Activated naive CD4-positive, alpha-beta T cell treated with anti-CD3 and anti-CD28 coated beads for 36 hours (primary cell): ENCODE measurements at regions of chr6 and their contacts with region 1.

Region 1: DNA sequence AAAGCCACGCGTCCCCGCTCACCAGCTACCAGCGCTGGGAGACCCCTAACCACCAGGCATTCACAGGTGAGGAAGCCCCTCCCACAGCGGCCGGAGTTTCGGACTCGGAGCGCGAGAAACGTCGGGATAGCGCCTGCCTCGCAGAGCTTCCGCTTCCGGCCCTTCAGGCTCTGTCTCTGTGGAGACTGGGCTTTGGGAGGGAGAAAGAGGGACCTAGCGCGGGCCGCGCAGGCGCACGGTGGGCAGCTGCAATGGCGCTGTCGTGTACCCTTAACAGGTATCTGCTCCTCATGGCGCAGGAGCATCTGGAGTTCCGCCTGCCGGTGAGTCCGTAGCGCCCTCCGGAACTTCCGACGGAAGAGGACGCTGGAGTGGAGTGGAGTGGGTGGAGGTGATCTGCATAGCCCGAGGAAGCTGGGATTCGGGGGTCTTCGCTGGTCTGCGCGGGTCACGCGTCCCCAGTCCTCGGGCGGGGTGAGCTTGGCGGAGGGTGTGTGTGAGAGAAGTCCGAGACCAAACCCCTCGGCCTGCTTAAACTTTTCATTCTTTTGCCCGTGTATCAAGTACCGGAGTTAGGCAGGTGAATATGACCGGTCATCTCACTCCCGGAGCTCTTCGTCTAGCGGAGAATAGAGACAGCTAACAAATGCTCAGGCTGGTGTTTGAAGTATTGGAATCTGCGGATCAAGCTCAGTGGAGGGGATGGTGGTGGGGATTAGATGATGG is at the start of gene TRMT11:
- DNase-seq: peak; percentile 84
- H3K4me3 Mint-ChIP-seq: peak within 1 kb of the TSS; percentile 28
- H3K27ac Mint-ChIP-seq: no peak within 1 kb of the TSS
- H3K4me1 Mint-ChIP-seq: peaks cover 11% of the 10 kb centered on the region
- H3K27me3 Mint-ChIP-seq: no peaks in the 10 kb centered on the region
- total RNA-seq, gene TRMT11: 40.6 to 41.9 TPM

Region 2: GRCh38 chr6:125191916-125192609 is 794.4 kb before region 1 on chr6:
- CTCF ChIA-PET with region 1: no interaction called
- intact Hi-C with region 1: loop called (anchors 10 kb)
- DNase-seq: peak; percentile 80
- H3K4me3 Mint-ChIP-seq: no peak overlapping the region
- H3K27ac Mint-ChIP-seq: no peak overlapping the region
- H3K4me1 Mint-ChIP-seq: peaks cover 2% of the 10 kb centered on the region
- H3K27me3 Mint-ChIP-seq: no peaks in the 10 kb centered on the region

Region 3: GRCh38 chr6:125779924-125780539 is 206.4 kb before region 1 on chr6:
- CTCF ChIA-PET with region 1: interaction called, 3 read pairs
- intact Hi-C with region 1: loop called (anchors 1 kb)
- DNase-seq: peak; percentile 90
- H3K4me3 Mint-ChIP-seq: no peak overlapping the region
- H3K27ac Mint-ChIP-seq: no peak overlapping the region
- H3K4me1 Mint-ChIP-seq: peaks cover 15% of the 10 kb centered on the region
- H3K27me3 Mint-ChIP-seq: peaks cover 1% of the 10 kb centered on the region

Region 4: GRCh38 chr6:125918681-125919566 is 67.5 kb before region 1 on chr6:
- CTCF ChIA-PET with region 1: no interaction called
- intact Hi-C with region 1: loop called (anchors 1 kb)
- DNase-seq: peak; percentile 73
- H3K4me3 Mint-ChIP-seq: peak overlapping the region; percentile 78
- H3K27ac Mint-ChIP-seq: peak overlapping the region; percentile 94
- H3K4me1 Mint-ChIP-seq: peaks cover 33% of the 10 kb centered on the region
- H3K27me3 Mint-ChIP-seq: no peaks in the 10 kb centered on the region

Region 5: GRCh38 chr6:126176282-126176681 is 189.8 kb after region 1 on chr6:
- CTCF ChIA-PET with region 1: no interaction called
- intact Hi-C with region 1: loop called (anchors 5 kb)
- DNase-seq: no peak
- H3K4me3 Mint-ChIP-seq: no peak overlapping the region
- H3K27ac Mint-ChIP-seq: no peak overlapping the region
- H3K4me1 Mint-ChIP-seq: peaks cover 2% of the 10 kb centered on the region
- H3K27me3 Mint-ChIP-seq: no peaks in the 10 kb centered on the region

Region 6: GRCh38 chr6:127266178-127266891 is 1279.9 kb after region 1 on chr6 and contains the start of gene RNF146:
- CTCF ChIA-PET with region 1: no interaction called
- intact Hi-C with region 1: loop called (anchors 10 kb)
- DNase-seq: peak; percentile 74
- H3K4me3 Mint-ChIP-seq: peak within 1 kb of the TSS; percentile 100
- H3K27ac Mint-ChIP-seq: peak within 1 kb of the TSS; percentile 100
- H3K4me1 Mint-ChIP-seq: peaks cover 25% of the 10 kb centered on the region
- H3K27me3 Mint-ChIP-seq: no peaks in the 10 kb centered on the region
- total RNA-seq, gene RNF146: 9.7 to 10.8 TPM